ENCODE measurements at regions of chr5 and their contacts with region 1.

Region 1: GRCh38 chr5:138213161-138214029 is at the start of gene CDC23:
- DNase-seq: peak; percentile 96
- H3K4me3 Mint-ChIP-seq: peak within 1 kb of the TSS; percentile 98
- H3K27ac Mint-ChIP-seq: peak within 1 kb of the TSS; percentile 89
- H3K4me1 Mint-ChIP-seq: peaks cover 18% of the 10 kb centered on the region
- H3K27me3 Mint-ChIP-seq: no peaks in the 10 kb centered on the region
- total RNA-seq, gene CDC23: 44.3 to 47.2 TPM

Region 2: DNA sequence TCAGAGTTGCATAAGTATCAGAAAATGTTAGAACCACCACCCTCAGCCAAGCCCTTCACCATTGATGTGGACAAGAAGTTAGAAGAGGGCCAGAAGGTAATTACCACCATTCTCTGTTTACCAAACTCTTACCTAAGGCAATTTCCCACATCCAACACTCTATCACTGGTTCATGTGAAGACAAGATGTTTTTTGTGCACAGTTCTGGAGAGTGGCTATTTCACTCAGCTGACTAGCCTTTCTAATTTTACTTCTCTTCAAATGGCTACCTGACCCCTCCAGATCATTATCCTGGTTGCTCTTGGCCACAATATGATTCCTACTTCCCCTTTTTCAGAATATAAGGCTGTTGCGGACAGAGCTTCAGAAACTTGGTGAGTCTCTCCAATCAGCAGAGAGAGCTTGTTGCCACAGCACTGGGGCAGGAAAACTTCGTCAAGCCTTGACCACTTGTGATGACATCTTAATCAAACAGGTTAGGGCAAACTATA is 27.4 kb before region 1 on chr5:
- CTCF ChIA-PET with region 1: no interaction called
- intact Hi-C with region 1: no loop called
- DNase-seq: no peak
- H3K4me3 Mint-ChIP-seq: no peak overlapping the region
- H3K27ac Mint-ChIP-seq: no peak overlapping the region
- H3K4me1 Mint-ChIP-seq: no peaks in the 10 kb centered on the region
- H3K27me3 Mint-ChIP-seq: no peaks in the 10 kb centered on the region

Region 3: DNA sequence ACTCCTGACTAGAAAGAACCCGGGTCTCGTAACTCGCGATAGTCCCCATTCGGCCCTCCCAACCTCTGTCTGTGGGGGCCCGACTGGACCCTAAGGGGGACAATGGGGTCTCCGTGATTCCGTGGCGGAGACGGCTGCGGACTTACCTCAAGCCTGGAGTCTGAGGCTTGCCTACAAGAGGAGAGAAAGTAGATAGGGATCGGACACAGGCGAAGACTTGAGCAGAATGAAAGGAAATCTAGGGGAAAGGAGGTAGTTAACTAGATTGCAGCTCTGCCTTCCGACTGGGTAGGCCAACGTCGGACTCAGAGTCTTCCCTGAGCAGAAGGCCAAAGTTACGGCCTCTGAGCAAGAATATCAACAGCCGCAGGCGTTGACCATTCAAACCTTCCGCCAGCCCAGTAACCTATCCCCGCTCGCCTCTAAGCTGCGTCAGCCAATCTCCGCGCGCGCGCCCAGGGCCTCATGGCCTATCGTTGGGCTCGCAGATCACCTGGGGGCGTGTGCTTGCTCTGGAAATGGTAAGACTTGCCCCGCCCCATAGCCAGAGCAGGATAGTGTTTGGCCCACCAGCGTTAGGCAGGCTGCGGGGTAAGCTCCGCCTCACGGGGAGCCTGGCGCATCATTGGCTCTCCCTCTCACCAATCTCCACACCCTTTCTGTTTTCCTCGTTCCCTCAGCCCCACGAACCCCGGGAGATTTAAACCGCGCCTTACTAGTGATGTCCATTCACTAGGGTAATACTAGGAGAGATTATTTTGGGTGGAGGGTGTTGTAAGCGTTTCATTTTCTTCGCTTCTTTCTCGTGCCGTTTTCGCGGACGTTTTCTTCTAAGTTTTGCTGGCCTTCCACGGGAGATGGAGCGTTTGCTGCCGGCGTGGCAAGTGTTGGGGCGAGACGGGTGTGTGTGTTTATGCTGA is 118.3 kb after region 1 on chr5 and contains the start of gene CDC25C:
- CTCF ChIA-PET with region 1: no interaction called
- intact Hi-C with region 1: loop called (anchors 1 kb)
- DNase-seq: peak; percentile 99
- H3K4me3 Mint-ChIP-seq: peak within 1 kb of the TSS; percentile 81
- H3K27ac Mint-ChIP-seq: peak within 1 kb of the TSS; percentile 83
- H3K4me1 Mint-ChIP-seq: peaks cover 9% of the 10 kb centered on the region
- H3K27me3 Mint-ChIP-seq: no peaks in the 10 kb centered on the region
- total RNA-seq, gene CDC25C: 23.2 to 26.6 TPM

Region 4: DNA sequence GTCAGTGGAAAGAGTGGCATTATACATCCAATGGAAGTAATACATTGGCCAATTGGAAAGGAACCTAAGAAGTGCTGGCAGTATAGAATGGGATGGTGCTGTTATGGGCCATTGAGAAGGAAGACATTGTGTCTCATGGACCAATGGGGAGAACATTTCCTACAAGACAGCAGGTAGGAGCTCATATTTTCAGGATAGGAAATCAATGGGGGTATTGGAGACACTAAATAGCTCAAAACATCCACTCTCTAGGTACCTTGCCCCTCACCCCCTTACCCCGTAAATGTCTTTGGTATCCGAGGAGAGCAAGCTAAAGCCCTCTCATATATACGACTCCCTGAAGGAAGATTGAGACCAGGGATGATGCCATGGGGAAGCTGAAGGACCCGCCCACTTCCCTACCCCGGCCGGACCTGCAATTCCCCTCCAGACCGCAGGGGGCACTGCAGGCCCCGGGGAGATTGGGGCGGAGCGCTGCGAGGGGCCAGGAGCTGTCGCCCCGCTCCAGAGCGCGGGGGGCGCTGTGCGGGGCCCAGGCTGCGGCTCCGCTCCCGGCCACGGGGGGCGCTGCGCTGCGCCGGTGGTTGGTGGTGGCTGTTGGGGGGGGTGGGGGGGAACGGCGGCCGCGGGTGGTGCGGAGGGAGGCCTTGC is 138.8 kb after region 1 on chr5 and contains the start of gene KDM3B:
- CTCF ChIA-PET with region 1: interaction called, 18 read pairs
- intact Hi-C with region 1: loop called (anchors 1 kb)
- DNase-seq: peak; percentile 91
- H3K4me3 Mint-ChIP-seq: peak within 1 kb of the TSS; percentile 96
- H3K27ac Mint-ChIP-seq: peak within 1 kb of the TSS; percentile 94
- H3K4me1 Mint-ChIP-seq: peaks cover 37% of the 10 kb centered on the region
- H3K27me3 Mint-ChIP-seq: no peaks in the 10 kb centered on the region
- total RNA-seq, gene KDM3B: 33.4 to 36.2 TPM

Region 5: GRCh38 chr5:138491669-138492559 is 278.5 kb after region 1 on chr5:
- CTCF ChIA-PET with region 1: no interaction called
- intact Hi-C with region 1: loop called (anchors 1 kb)
- DNase-seq: peak; percentile 85
- H3K4me3 Mint-ChIP-seq: peak overlapping the region; percentile 89
- H3K27ac Mint-ChIP-seq: no peak overlapping the region
- H3K4me1 Mint-ChIP-seq: peaks cover 11% of the 10 kb centered on the region
- H3K27me3 Mint-ChIP-seq: peaks cover 11% of the 10 kb centered on the region